ENCODE measurements at regions of chr1 and their contacts with region 1.

Region 1: GRCh38 chr1:222634180-222635013 is 16.5 kb downstream of the MIA3 start:
- DNase-seq: peak; percentile 62
- H3K4me3 Mint-ChIP-seq: no peak overlapping the region
- H3K27ac Mint-ChIP-seq: no peak overlapping the region
- H3K4me1 Mint-ChIP-seq: peaks cover 7% of the 10 kb centered on the region
- H3K27me3 Mint-ChIP-seq: no peaks in the 10 kb centered on the region

Region 2: DNA sequence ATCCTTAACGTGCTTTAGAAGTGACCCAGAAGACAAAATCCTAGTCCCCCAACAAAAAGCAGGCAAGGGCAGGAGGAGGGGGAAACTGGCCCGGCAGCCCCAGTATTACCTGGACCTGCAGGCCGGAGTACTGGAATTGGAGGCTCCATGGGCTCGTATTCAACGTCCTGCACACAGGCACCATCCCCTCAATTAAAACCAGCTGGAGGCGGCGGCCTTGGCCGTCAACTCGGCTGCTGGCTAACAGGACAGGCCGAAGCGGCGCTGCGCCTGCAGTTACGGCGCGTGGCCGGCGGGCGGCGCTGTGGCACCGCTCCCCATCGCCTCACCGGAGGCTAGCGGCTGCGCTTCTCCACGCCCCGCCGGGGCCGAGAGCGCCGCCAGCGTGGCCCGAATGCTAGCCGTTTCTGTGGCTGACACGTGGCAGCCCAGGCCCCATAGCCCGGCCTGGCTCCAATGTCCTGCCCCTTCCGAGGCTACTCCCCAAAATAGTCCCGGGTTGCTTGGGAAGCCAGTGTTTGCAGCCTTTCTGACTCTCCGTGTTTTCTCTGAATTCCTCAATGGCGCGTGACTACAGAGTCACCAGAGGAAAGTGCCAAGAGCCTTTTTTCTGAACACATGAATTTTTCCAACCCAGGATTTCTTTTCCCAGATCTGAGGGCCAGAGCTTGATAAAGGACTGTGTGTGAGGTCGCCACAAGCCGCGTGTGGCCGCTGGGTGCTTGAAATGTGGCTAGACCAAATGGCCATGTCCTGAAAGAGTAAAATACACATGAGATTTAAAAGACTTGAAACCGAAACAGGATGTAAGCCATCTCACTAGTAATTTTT is 169.0 kb before region 1 on chr1:
- CTCF ChIA-PET with region 1: interaction called, 58 read pairs
- POLR2A ChIA-PET with region 1: interaction called, 5 read pairs
- DNase-seq: peak; percentile 81
- H3K4me3 Mint-ChIP-seq: peak overlapping the region; percentile 71
- H3K27ac Mint-ChIP-seq: peak overlapping the region; percentile 47
- H3K4me1 Mint-ChIP-seq: peaks cover 10% of the 10 kb centered on the region
- H3K27me3 Mint-ChIP-seq: peaks cover 13% of the 10 kb centered on the region

Region 3: DNA sequence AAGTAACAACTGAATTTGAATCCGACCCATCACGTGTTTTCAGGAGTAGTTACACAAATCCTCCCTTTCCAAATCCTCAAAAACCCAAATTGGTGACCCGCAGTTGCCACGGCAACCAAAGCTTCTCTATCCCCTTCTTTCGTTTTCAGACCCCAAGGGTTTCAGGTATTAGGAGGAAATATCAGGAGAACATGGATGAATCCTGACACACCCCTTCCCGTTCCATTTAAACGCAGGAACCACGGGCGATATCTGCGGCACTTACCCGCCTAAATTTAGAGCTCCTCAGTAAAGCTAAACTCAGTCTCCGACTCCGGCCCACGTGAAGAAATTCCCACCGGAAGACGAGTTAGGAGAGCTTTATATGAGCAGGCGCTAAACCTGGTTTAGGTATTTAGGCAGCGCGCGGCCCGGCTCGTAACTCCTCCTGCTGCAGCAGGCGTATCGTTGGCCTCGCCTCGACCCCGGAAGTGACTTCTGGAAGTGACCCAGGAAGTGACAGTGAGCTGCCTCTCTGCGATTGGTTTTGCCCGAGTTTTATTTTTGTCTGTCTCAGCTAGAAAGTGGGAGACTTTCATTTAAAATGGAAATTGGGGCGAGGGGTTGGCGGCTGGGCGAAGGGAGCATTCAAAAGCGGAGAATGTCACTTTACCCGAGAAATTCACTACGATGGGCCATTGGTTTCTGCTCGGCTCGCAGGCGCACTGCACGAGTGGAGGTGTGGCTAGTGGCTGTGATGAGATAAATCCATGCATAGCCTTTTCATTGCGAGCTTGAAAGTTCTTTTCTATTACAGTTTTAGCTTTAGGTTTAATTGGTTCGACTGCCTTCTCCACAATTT is 44.7 kb before region 1 on chr1 and contains the start of gene TAF1A:
- CTCF ChIA-PET with region 1: interaction called, 20 read pairs
- POLR2A ChIA-PET with region 1: no interaction called
- DNase-seq: peak; percentile 89
- H3K4me3 Mint-ChIP-seq: peak within 1 kb of the TSS; percentile 93
- H3K27ac Mint-ChIP-seq: peak within 1 kb of the TSS; percentile 87
- H3K4me1 Mint-ChIP-seq: peaks cover 42% of the 10 kb centered on the region
- H3K27me3 Mint-ChIP-seq: no peaks in the 10 kb centered on the region
- total RNA-seq, gene TAF1A: 9.1 to 10.0 TPM

Region 4: GRCh38 chr1:222624214-222624613 is 10.2 kb before region 1 on chr1:
- CTCF ChIA-PET with region 1: interaction called, 34 read pairs
- POLR2A ChIA-PET with region 1: interaction called, 11 read pairs
- DNase-seq: no peak
- H3K4me3 Mint-ChIP-seq: no peak overlapping the region
- H3K27ac Mint-ChIP-seq: no peak overlapping the region
- H3K4me1 Mint-ChIP-seq: peaks cover 13% of the 10 kb centered on the region
- H3K27me3 Mint-ChIP-seq: no peaks in the 10 kb centered on the region

Region 5: DNA sequence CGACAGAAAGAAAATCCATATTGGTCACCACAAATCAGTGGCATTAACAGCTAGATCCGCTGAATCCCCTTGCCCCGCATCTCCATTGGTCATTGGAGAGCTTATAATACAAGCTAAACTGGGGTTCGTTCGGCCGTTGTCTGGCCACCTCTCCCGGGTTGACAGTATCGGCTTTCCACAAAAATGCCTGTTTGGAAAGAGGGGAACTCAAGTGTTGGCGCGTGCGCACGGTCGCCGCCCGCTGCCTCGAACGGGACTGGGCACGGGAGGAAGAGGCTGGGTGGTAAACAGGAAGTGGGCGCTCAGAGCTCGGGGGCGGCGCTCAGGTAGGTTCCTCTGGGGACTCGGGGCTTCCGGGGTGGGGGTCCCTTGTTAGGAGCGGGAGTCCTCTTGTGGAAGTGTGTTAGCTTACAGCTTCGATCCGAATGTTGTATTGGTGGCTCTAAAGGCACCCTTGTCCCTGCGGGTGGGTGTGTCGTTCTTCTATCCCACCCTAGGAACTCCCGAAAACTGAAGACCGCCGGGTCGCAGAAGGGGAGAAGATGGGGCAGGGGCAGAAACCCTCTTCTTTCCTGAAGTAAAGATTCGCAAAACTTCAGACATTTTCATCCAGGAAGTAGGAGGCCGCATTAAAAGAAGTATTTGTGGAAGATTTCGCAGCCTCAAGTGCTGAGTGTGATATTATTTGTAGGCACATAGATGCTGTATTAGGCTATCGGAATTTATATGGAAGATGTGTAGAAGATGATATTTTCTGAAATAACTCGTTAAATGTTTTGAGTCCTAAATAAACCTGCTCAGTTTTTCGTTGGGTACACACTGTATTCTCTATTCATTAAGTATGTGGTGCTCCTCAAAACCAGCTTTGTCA is 78.9 kb after region 1 on chr1:
- CTCF ChIA-PET with region 1: interaction called, 11 read pairs
- POLR2A ChIA-PET with region 1: interaction called, 3 read pairs
- DNase-seq: peak; percentile 90
- H3K4me3 Mint-ChIP-seq: peak overlapping the region; percentile 99
- H3K27ac Mint-ChIP-seq: peak overlapping the region; percentile 99
- H3K4me1 Mint-ChIP-seq: peaks cover 54% of the 10 kb centered on the region
- H3K27me3 Mint-ChIP-seq: no peaks in the 10 kb centered on the region

Measured in activated CD4-positive, alpha-beta memory T cell treated with anti-CD3 and anti-CD28 coated beads, Interleukin-2, amount 10 ng/mL, durations not matched to agents 7 days and 5 days (primary cell).